Colonic mucosa (tissue), 4 donors: ENCODE measurements at regions of chr5 and their contacts with region 1.

Region 1: GRCh38 chr5:134041570-134042411 is 37.0 kb upstream of the VDAC1 start:
- DNase-seq: no peak
- H3K4me3 ChIP-seq: no peak overlapping the region
- H3K27ac ChIP-seq: no peak overlapping the region
- H3K4me1 ChIP-seq: no peaks in the 10 kb centered on the region
- H3K27me3 ChIP-seq: no peaks in the 10 kb centered on the region
- CTCF ChIP-seq: no peak

Region 2: DNA sequence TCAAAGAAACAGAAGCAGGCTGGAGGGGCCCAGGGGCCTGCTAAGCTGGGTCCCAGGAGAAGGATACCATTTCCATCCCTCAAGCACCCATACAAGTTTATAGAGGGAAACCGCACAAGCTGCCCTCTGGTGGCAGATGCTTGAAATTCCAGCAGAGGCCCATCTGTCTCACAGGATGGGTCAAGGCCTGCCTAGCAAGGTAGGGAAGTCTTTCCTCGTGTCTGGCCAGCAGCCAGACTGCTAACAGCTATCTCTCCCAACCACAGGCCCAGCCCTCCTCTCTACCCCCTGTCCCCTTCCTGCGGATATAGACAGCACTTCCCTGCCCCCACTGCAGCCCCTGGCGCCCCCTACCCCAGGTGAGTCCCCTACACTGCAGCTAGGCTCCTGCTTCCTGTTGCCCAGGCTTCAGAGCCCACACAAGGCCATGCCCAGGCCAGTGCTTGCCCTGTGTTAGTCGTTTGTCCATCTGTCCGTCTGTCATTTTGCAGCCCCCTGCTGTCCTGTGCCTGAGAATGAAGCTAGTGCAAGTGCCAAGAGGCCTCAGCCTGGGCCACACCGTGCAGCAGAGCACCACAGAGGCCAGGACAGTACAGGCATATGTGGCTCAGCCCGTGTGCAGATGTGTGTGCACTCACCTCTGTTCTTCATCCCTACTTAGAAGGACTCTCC is 98.9 kb after region 1 on chr5:
- intact Hi-C with region 1: loop called (anchors 5 kb)
- DNase-seq: peak; percentile 79
- H3K4me3 ChIP-seq: no peak overlapping the region
- H3K27ac ChIP-seq: no peak overlapping the region
- H3K4me1 ChIP-seq: no peaks in the 10 kb centered on the region
- H3K27me3 ChIP-seq: no peaks in the 10 kb centered on the region
- CTCF ChIP-seq: peak; percentile 84